Breast epithelium (tissue), 4 donors: ENCODE measurements at regions of chr18 and their contacts with region 1.

Region 1: DNA sequence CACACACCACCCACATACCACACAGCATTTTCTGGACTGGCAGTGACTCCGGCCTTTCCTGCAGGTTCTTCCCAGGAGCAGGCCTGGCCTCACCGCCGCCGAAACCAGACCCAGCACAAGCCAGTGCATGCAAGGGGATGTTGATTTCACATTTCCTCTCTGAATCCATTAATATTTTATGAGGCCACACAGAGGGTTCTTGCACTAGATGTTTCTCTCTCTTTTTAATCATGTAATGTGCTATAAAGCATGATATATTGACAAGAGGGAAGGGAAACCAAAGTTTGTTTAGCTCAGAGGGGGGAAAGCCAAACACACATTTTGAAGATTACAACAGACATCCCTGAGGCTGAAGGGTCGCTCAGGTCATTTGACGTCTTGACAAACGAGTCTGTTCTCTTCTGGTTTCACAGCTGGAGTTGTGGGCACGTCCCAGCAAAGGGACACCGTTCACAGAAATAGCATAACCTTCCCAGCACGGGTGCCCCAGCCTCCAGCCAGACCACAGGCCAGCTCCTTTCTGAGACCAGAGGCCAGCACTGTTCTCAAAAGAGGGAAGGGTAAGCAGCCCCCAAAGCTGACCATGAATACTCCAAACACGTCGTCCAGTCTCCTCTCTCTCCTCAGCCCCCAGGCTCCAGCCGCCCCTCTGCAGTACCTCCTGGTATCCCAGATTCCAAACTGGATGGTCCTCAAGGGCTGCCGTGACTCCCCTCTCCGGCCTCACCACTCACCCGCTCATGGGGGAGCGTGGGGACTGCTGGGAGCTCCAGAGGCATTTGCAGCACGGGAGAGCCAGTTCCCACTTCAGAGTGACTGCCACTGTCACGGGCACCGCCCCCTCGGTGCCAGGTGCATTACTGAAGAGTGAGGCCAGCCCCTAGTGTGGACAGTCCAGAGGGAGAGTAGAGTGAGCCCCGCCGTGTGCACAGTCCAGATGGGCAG is 340.3 kb upstream of the SALL3 start:
- DNase-seq: no peak
- H3K4me3 ChIP-seq: no peak overlapping the region
- H3K27ac ChIP-seq: no peak overlapping the region
- H3K4me1 ChIP-seq: no peaks in the 10 kb centered on the region
- H3K27me3 ChIP-seq: peaks cover 0 to 11% of the 10 kb centered on the region in 2 donors
- CTCF ChIP-seq: no peak
- POLR2A ChIP-seq: no peak

Region 2: DNA sequence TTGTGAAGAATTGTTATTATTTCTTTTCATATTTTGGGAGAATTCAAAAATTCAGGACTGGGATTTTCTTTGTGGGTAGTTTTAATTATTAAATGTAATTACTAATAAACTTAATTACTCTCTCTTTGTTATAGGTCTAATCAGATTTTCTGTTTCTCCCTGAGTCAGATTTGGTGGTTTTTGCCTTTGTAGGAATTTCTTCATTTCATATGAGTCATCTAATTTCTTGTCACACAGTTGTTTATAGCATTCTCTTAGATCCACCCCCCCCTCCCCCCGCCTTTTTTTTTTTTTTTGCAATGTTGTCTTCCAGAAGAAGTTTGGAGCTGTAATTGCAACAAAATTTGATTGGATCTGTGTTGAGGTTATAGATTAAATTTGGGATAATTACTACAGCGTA is 1415.6 kb before region 1 on chr18:
- intact Hi-C with region 1: no loop called
- DNase-seq: no peak
- H3K4me3 ChIP-seq: no peak overlapping the region
- H3K27ac ChIP-seq: no peak overlapping the region
- H3K4me1 ChIP-seq: no peaks in the 10 kb centered on the region
- H3K27me3 ChIP-seq: no peaks in the 10 kb centered on the region
- CTCF ChIP-seq: no peak
- POLR2A ChIP-seq: no peak

Region 3: GRCh38 chr18:77379976-77380509 is 1259.2 kb before region 1 on chr18:
- intact Hi-C with region 1: loop called (anchors 5 kb)
- DNase-seq: no peak
- H3K4me3 ChIP-seq: no peak overlapping the region
- H3K27ac ChIP-seq: no peak overlapping the region
- H3K4me1 ChIP-seq: no peaks in the 10 kb centered on the region
- H3K27me3 ChIP-seq: no peaks in the 10 kb centered on the region
- CTCF ChIP-seq: no peak
- POLR2A ChIP-seq: no peak

Region 4: DNA sequence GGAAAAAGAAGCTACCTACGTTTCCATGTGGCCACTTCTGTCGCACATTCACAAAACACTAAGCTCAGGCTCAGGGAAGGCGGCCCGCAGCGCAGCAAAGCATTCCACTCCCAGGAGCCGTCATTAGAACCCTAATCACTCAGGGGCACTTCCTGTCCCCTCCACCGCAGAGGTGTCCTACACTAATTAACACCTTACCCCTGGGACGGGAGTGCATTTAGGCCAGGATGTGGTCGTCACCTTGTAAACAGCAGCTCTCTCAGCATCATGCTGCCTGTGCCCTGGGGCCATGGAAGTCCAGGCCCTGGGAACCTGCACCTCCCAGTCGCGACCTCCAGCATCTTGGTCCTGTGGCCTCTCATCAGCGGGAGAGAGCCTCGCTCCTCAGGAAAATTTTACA is 19.4 kb before region 1 on chr18:
- intact Hi-C with region 1: loop called (anchors 1 kb)
- DNase-seq: no peak
- H3K4me3 ChIP-seq: no peak overlapping the region
- H3K27ac ChIP-seq: no peak overlapping the region
- H3K4me1 ChIP-seq: no peaks in the 10 kb centered on the region
- H3K27me3 ChIP-seq: peaks cover 0 to 15% of the 10 kb centered on the region in 2 donors
- CTCF ChIP-seq: no peak
- POLR2A ChIP-seq: no peak

Region 5: GRCh38 chr18:80241919-80242777 is 1602.9 kb after region 1 on chr18:
- intact Hi-C with region 1: no loop called
- DNase-seq: no peak
- H3K4me3 ChIP-seq: no peak overlapping the region
- H3K27ac ChIP-seq: no peak overlapping the region
- H3K4me1 ChIP-seq: no peaks in the 10 kb centered on the region
- H3K27me3 ChIP-seq: no peaks in the 10 kb centered on the region
- CTCF ChIP-seq: no peak
- POLR2A ChIP-seq: no peak